Gastrocnemius medialis (tissue), 4 donors: ENCODE measurements at regions of chr3 and their contacts with region 1.

Region 1: GRCh38 chr3:64209866-64210621 is 15.2 kb downstream of the PRICKLE2 start:
- DNase-seq: peak; percentile 29 to 65
- ATAC-seq: peak; percentile 69 to 80
- H3K4me3 ChIP-seq: no peak overlapping the region
- H3K27ac ChIP-seq: peak overlapping the region; percentile 51 to 69 (median 60)
- H3K4me1 ChIP-seq: peaks cover 13 to 19% of the 10 kb centered on the region in 2 donors
- H3K27me3 ChIP-seq: no peaks in the 10 kb centered on the region
- CTCF ChIP-seq: no peak
- POLR2A ChIP-seq: no peak

Region 2: GRCh38 chr3:63092520-63092919 is 1117.5 kb before region 1 on chr3:
- in situ Hi-C with region 1: no loop called
- intact Hi-C with region 1: no loop called
- DNase-seq: no peak
- ATAC-seq: no peak
- H3K4me3 ChIP-seq: no peak overlapping the region
- H3K27ac ChIP-seq: no peak overlapping the region
- H3K4me1 ChIP-seq: no peaks in the 10 kb centered on the region
- H3K27me3 ChIP-seq: no peaks in the 10 kb centered on the region
- CTCF ChIP-seq: no peak
- POLR2A ChIP-seq: no peak

Region 3: DNA sequence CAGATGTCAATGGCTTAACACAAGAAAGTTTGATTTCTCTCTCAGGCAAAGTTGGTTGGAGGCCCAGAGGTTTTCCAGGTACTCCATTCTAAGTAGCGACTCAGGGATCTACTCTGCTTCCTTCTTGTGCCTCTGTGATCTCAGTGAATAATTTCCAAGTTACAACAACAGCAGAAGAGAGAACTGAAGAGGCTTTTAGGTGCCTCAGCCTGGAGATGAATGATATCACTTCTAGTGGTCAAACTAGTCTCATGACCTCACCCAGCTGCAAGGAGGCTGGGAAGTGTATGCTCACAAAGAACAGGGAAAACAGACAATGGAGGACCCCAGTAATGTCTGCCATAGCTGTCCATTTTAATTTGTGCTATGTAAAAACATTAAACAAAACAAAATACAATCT is 19.9 kb after region 1 on chr3:
- in situ Hi-C with region 1: no loop called
- intact Hi-C with region 1: no loop called
- DNase-seq: no peak
- ATAC-seq: no peak
- H3K4me3 ChIP-seq: no peak overlapping the region
- H3K27ac ChIP-seq: no peak overlapping the region
- H3K4me1 ChIP-seq: peaks cover under 1 to 11% of the 10 kb centered on the region in 2 donors
- H3K27me3 ChIP-seq: no peaks in the 10 kb centered on the region
- CTCF ChIP-seq: no peak
- POLR2A ChIP-seq: no peak

Region 4: DNA sequence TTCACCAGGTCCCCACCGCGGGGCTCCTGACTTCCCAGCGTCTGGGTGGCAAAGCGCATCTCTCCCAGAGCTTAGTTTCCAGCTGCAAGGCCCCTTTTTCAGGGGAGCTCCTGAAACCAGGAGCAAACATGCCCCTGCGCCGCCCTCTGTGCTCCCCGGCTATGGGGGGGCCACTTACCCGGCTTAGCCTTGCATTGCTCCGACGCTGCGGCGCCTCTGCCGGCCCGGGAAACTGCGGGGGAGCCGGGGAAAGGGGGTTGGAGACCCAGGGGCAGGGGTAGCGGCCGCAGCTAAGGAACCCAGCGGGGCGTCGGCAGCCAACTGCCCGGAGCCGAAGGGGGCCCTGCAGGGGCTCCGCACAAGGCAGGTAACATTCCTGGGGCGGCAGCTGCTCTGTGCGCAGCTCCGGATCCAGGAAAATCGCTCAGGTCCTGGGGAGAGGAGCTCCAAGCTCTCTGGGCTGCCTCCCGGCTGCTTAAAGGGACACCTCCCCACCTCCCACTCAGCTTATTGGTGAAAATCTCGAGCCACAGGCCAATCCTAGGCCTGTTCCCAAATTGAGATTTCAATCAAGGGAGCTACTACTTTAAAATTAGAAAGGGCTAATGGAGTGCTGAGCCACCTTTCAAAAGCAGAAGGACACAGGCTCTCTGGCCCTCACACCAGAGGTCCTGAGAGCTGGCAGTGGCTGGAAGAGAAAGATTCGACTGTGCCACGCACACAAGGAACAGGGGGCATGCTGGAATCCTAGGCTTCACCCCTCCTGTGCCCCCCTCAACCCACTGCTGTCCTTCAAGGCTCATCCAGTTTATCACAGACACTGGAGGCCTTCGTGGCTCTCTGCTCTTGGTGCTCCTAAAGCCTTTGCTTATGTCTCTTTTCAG is 57.9 kb after region 1 on chr3:
- in situ Hi-C with region 1: no loop called
- intact Hi-C with region 1: loop called (anchors 5 kb)
- DNase-seq: peak; percentile 38 to 40
- ATAC-seq: peak in 1 of 2 donors; percentile 62
- H3K4me3 ChIP-seq: peak overlapping the region; percentile 59 to 74 (median 67)
- H3K27ac ChIP-seq: peak overlapping the region; percentile 76 to 81 (median 76)
- H3K4me1 ChIP-seq: peaks cover 13 to 18% of the 10 kb centered on the region in 2 donors
- H3K27me3 ChIP-seq: no peaks in the 10 kb centered on the region
- CTCF ChIP-seq: no peak
- POLR2A ChIP-seq: peak; percentile 48 to 58